Left ventricle myocardium superior (tissue), 1 donor: ENCODE measurements at regions of chr12 and their contacts with region 1.

Region 1: DNA sequence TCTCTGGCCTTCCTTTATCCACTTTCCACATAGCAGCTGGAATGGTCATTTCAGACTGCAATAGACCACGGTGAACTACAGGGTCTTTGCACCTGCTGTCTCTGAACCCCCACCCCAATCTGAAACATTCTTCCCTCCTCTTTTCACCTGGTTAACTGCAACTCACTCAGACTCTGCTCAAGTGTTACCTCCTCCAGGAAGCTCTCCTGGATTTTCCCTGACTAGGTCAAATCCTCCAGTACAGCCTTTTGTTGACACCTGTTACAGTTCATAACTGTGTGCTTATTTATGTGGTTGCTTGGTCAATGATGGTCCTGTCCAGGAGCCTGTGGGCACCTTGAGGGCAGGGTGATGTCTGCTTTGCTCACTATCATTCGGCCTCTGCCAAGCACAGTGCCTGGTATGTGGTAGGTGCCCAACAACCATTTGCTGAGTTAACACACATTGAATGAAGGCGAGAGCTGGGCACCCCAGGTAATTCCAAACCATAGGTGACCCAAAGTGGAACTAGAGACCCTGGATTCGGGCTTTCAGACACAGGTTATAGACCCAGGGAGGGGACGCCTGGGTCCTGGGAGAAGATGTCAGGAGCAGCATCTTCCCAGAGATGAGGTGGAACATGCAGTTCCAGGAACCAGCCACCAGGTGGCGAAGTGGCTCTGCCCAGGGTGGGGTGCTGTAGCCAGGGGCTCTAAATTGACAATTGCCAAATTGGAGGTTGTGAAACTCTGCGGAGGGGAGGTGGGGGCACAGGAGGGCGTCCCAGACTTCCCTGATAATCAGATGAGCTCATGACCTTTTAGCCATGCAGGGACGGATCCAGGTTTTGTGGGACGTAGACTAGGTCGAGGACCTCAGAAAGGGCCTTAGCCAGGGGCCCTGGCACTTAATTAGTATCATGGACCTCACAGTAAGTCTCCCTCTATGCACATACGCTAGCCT is 28.1 kb downstream of the TRPV4 start:
- DNase-seq: peak; percentile 80
- ATAC-seq: peak; percentile 87

Region 2: GRCh38 chr12:109844983-109845823 is 40.1 kb after region 1 on chr12:
- intact Hi-C with region 1: loop called (anchors 5 kb)
- DNase-seq: peak; percentile 95
- ATAC-seq: peak; percentile 98